A549 (cell line): ENCODE measurements at regions of chr20 and their contacts with region 1.

Region 1: GRCh38 chr20:49982346-49983122 is at the start of gene SNAI1:
- DNase-seq: peak; percentile 88 to 97
- ATAC-seq: peak; percentile 80 to 81
- H3K4me3 ChIP-seq: peak within 1 kb of the TSS; percentile 69
- H3K27ac ChIP-seq: peak within 1 kb of the TSS; percentile 80 to 95
- H3K4me1 ChIP-seq: peaks cover 57% of the 10 kb centered on the region
- CTCF ChIP-seq: peak; percentile 90
- EP300 ChIP-seq: no peak
- POLR2A ChIP-seq: peak; percentile 99
- RAD21 ChIP-seq: peak; percentile 34 to 79; a peak in 4 of 5 replicates
- polyA plus RNA-seq, gene SNAI1: 7.0 and 7.2 TPM in 2 replicates

Region 2: GRCh38 chr20:49846206-49846807 is 136.2 kb before region 1 on chr20:
- CTCF ChIA-PET with region 1: no interaction called
- POLR2A ChIA-PET with region 1: no interaction called
- DNase-seq: peak; percentile 47 to 72
- ATAC-seq: peak; percentile 92 to 96
- H3K4me3 ChIP-seq: no peak overlapping the region
- H3K27ac ChIP-seq: peak overlapping the region; percentile 59 to 74; a peak in 5 of 6 replicates
- H3K4me1 ChIP-seq: peaks cover 20% of the 10 kb centered on the region; the same call in 1 of the 3 replicates
- CTCF ChIP-seq: peak; percentile 86
- EP300 ChIP-seq: no peak
- POLR2A ChIP-seq: no peak
- RAD21 ChIP-seq: peak; percentile 89 to 91

Region 3: GRCh38 chr20:49956686-49957085 is 25.8 kb before region 1 on chr20:
- CTCF ChIA-PET with region 1: interaction called, 90 read pairs
- POLR2A ChIA-PET with region 1: no interaction called
- DNase-seq: no peak
- ATAC-seq: no peak
- H3K4me3 ChIP-seq: no peak overlapping the region
- H3K27ac ChIP-seq: no peak overlapping the region
- H3K4me1 ChIP-seq: no peaks in the 10 kb centered on the region
- CTCF ChIP-seq: no peak
- EP300 ChIP-seq: no peak
- POLR2A ChIP-seq: no peak
- RAD21 ChIP-seq: no peak

Region 4: DNA sequence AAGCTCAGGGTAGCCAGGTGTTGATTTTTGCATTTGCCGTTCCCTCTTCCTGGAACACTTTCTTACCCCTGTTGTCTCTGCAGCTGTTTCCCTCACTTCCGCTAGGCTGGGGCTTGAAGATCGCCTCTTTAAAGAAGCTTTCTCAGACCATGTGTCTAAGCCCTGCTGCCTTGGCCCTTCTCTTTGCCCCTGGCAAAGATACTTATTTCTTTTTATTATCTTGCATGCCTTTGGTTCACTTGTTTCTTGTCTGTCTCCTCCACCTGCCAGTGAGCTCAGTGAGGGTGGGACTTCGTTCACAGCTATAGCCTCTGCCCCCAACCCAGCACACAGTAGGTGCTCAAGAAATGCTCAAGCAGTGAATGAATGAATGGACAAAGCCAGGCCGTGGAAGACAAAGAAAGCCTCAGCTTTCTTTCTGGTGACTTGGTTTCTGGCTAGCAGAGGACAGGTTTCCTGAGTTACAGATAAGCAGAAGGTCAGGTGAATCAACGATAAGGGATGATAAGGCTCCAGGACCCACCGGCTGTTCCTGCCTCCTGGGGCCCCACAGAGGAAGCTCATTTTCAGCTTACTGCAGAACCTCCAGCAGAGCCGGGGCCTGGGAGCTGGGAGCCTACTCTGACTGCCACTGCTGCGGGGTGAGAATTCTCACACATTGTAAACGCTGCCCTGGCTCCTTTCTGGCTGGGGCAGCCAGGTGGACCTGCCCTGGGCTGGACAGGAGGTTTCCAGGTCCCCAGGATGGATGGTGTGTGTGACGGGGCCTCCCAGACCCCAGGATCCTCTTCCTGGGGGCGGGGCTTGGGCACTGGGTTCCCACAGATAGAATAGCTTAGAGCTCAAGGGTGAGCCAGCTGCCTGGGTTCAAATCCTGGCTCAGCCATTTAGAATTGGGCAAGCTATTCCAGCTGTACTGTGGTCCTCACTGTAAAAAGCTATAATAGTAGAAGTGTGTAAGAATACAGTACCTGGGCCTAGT is 30.0 kb after region 1 on chr20:
- CTCF ChIA-PET with region 1: interaction called, 16 read pairs
- POLR2A ChIA-PET with region 1: no interaction called
- DNase-seq: no peak
- ATAC-seq: no peak
- H3K4me3 ChIP-seq: no peak overlapping the region
- H3K27ac ChIP-seq: peak overlapping the region in 1 of 2 experiments; percentile 44; a peak in 2 of 6 replicates
- H3K4me1 ChIP-seq: peaks cover 7% of the 10 kb centered on the region; the same call in 2 of the 3 replicates
- CTCF ChIP-seq: no peak
- EP300 ChIP-seq: no peak
- POLR2A ChIP-seq: no peak
- RAD21 ChIP-seq: no peak

Region 5: DNA sequence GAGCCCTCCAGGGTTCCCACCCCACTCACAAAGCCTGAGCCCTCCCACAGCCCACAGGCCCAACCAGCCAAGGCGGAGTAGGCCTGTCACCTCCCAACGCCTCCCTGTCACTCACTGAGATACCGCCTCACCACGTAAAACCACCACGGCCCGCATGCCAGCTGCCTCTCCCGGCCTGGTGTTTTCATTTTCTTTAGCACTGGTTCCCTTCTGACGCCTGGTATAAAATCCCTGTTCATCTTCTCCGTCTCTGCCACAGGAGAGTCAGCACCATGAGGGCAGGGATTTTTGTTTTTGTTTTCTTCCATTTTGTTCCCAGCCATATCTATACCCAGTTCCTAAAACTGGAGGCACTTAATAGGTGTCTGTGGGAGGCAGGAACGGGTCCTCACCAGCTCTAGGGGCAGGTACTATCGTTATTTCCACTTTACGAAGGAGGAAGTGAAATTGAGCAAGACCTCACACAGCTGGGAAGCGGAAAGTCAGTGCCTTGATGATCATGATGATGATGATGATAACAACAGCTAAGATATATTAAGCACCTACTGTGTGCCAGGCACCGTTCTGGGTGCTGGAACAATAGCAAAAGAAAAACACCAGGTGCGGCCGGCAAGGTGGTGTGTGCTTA is 58.8 kb after region 1 on chr20:
- CTCF ChIA-PET with region 1: interaction called, 33 read pairs
- POLR2A ChIA-PET with region 1: no interaction called
- DNase-seq: no peak
- ATAC-seq: no peak
- H3K4me3 ChIP-seq: no peak overlapping the region
- H3K27ac ChIP-seq: peak overlapping the region in 1 of 2 experiments; percentile 65; a peak in 3 of 6 replicates
- H3K4me1 ChIP-seq: peaks cover 17% of the 10 kb centered on the region
- CTCF ChIP-seq: no peak
- EP300 ChIP-seq: no peak
- POLR2A ChIP-seq: no peak
- RAD21 ChIP-seq: no peak

Region 6: GRCh38 chr20:50070991-50071888 is 88.7 kb after region 1 on chr20:
- CTCF ChIA-PET with region 1: interaction called, 1,049 read pairs
- POLR2A ChIA-PET with region 1: interaction called, 79 read pairs
- DNase-seq: peak; percentile 81 to 88
- ATAC-seq: peak; percentile 96 to 97
- H3K4me3 ChIP-seq: peak overlapping the region; percentile 38
- H3K27ac ChIP-seq: peak overlapping the region; percentile 81 to 89
- H3K4me1 ChIP-seq: peaks cover 19% of the 10 kb centered on the region; the same call in 2 of the 3 replicates
- CTCF ChIP-seq: peak; percentile 98
- EP300 ChIP-seq: no peak
- POLR2A ChIP-seq: no peak
- RAD21 ChIP-seq: peak; percentile 99 to 100

Region 7: DNA sequence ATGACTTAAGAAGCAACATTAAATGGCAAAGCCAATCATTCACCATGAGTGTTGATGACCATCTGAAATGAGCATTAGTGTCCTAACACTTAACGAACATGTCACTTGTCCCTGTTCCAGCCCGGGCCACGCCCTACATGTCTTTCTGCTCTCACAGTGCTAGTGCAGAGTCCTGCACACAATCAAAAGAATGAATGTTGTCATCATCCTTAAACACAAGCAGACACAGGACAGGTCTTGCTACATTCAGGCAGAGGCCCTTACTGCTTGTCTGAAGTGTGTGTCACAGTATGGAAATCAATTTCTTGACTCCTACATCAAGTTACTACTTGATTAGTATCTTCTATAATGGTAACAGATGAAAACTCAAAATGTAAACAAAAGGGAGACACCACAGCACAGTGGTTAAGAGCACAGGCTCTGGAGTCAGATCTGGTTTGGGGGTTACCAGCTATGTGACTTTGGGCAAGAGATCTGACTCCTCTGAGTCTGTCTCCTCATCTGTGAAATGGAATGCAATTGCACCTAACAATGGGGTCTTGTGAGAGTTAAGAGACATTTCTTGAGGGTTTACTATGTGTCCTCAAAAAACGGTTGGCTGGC is 113.0 kb after region 1 on chr20:
- CTCF ChIA-PET with region 1: interaction called, 18 read pairs
- POLR2A ChIA-PET with region 1: no interaction called
- DNase-seq: no peak
- ATAC-seq: peak in 1 of 2 experiments; percentile 34; a peak in 1 of 6 replicates
- H3K4me3 ChIP-seq: no peak overlapping the region
- H3K27ac ChIP-seq: no peak overlapping the region
- H3K4me1 ChIP-seq: peaks cover 10% of the 10 kb centered on the region; the same call in 2 of the 3 replicates
- CTCF ChIP-seq: no peak
- EP300 ChIP-seq: no peak
- POLR2A ChIP-seq: no peak
- RAD21 ChIP-seq: no peak

Region 8: GRCh38 chr20:50165684-50166554 is 183.4 kb after region 1 on chr20:
- CTCF ChIA-PET with region 1: interaction called, 22 read pairs
- POLR2A ChIA-PET with region 1: interaction called, 3 read pairs
- DNase-seq: peak; percentile 99 to 100
- ATAC-seq: peak; percentile 94 to 98
- H3K4me3 ChIP-seq: peak overlapping the region; percentile 30
- H3K27ac ChIP-seq: peak overlapping the region; percentile 81 to 92
- H3K4me1 ChIP-seq: peaks cover 40% of the 10 kb centered on the region
- CTCF ChIP-seq: no peak
- EP300 ChIP-seq: peak; percentile 68 to 90; a peak in 3 of 5 replicates
- POLR2A ChIP-seq: no peak
- RAD21 ChIP-seq: peak in 1 of 2 experiments; percentile 45; a peak in 2 of 5 replicates